ENCODE measurements at regions of chr5 and their contacts with region 1.

Region 1: DNA sequence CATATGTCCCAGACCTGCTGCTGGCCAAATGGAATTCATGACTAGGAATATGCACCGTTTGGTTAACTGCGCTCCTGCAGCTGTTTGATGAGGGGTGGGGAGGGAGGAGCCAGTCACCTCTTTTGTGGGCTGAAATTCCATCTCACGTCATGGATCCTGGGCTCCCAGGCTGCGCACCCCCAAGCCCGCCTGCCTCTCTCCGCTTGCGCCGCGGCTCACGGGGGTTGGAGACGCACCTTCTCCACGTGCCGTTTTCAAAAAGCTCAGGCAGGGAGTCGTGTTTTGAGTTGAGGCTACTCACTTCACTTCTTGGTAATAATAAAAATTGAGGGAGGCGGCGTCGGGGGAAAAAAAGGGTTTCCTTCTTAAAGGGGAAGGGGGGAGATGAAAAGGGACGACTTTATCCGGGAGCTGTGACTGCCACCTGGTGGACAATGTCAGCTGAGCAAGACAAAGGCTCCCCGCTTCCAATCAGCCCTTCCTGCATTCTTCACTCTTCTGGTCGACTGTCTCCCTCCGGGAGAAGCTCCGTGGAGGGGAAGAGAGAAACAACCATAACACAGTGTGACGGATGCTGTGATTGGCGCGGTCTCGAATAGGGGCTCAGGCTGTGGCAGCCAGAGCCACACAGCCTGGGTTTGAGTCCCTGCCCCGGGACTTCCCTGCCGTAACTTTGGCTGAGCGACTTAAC is 15.9 kb upstream of the C5orf47 start:
- DNase-seq: peak; percentile 54 to 81
- H3K4me3 ChIP-seq: no peak overlapping the region; the same call in 1 of the 2 replicates
- H3K27ac ChIP-seq: no peak overlapping the region
- H3K4me1 ChIP-seq: peaks cover 37% of the 10 kb centered on the region
- H3K27me3 ChIP-seq: no peaks in the 10 kb centered on the region
- CTCF ChIP-seq: peak; percentile 90

Region 2: DNA sequence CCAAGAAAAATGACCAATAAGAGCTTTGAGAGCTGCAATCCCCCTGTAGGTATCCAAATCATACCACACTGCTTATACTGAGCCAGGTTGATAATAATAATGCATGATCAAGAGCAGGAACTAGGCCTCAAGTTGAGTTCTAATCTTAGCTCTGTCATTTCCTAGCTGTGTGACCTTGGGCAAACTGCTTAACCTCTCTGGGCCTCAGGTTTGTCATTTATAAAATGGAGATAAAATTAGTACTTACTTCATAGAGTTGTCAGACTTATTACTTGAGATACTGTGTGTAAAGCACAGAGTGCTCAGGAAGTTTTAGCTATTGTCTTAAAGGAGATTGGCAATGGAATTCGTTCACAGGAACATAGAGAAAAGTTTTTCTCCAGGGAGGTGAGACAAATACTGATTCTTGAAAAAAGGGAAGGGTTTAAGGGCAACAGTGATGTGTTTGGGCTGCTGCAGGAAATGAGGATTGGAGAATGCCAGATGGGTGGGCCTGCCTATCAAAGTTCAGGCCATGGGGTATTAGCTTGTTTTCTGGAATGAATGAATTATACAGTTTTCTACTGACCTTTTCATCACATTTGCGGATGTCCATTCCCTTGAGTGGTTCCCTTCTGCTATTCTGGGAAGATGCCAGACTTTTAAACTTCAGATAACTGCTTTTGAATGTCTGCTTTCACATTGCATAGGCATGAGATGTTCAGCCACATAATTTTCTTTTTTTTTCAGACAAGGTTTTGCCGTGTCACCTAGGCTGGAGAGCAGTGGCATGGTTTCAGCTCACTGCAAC is 999.7 kb before region 1 on chr5:
- CTCF ChIA-PET with region 1: no interaction called
- POLR2A ChIA-PET with region 1: no interaction called
- intact Hi-C with region 1: loop called (anchors 10 kb)
- DNase-seq: no peak
- H3K4me3 ChIP-seq: no peak overlapping the region
- H3K27ac ChIP-seq: no peak overlapping the region
- H3K4me1 ChIP-seq: no peaks in the 10 kb centered on the region
- H3K27me3 ChIP-seq: no peaks in the 10 kb centered on the region
- CTCF ChIP-seq: no peak

Region 3: GRCh38 chr5:173293817-173294672 is 679.0 kb before region 1 on chr5:
- CTCF ChIA-PET with region 1: interaction called, 5 read pairs
- POLR2A ChIA-PET with region 1: no interaction called
- intact Hi-C with region 1: loop called (anchors 2 kb)
- DNase-seq: peak; percentile 71 to 83
- H3K4me3 ChIP-seq: peak overlapping the region; percentile 45; the same call in 1 of the 2 replicates
- H3K27ac ChIP-seq: peak overlapping the region; percentile 28
- H3K4me1 ChIP-seq: peaks cover 26% of the 10 kb centered on the region
- H3K27me3 ChIP-seq: no peaks in the 10 kb centered on the region
- CTCF ChIP-seq: peak; percentile 92

Region 4: DNA sequence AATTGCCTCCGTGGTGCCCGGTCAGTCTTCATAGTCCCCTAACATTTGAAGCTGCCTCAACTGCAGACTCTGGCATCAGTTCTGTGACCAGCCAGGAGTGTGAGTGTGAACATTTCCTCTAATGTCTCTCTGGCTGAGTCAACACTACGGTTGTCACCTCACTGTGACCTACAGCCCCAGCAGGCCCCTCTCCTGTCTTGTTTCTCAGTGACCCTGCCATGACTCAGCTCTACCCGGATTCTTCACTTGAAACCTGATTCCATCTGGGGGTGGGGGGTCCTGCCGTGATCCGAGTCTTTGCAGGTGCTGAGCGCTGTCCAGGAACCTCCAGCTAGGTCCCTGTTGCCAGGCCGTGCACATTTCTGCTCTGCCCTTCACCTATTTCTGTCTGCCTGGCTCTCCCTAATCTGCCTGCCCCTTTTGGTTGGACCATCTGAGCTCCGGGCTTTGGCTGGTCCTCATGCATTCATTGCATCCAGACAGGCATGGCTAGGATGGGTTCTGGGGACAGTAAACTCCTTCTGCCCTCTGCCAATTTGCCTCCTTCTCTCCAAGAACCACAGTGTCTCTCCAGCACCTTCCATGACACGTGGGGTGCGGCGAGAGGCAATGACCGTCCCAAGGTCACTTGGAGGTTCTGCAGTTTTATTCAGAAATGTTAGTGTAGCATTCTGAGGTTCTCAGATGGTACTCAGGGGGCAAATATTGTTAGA is 669.0 kb before region 1 on chr5:
- CTCF ChIA-PET with region 1: no interaction called
- POLR2A ChIA-PET with region 1: interaction called, 10 read pairs
- intact Hi-C with region 1: no loop called
- DNase-seq: peak; percentile 87 to 88
- H3K4me3 ChIP-seq: no peak overlapping the region
- H3K27ac ChIP-seq: peak overlapping the region; percentile 86
- H3K4me1 ChIP-seq: peaks cover 41% of the 10 kb centered on the region
- H3K27me3 ChIP-seq: no peaks in the 10 kb centered on the region
- CTCF ChIP-seq: no peak

Region 5: GRCh38 chr5:173917788-173918786 is 55.0 kb before region 1 on chr5:
- CTCF ChIA-PET with region 1: no interaction called
- POLR2A ChIA-PET with region 1: no interaction called
- intact Hi-C with region 1: loop called (anchors 2 kb)
- DNase-seq: peak; percentile 53 to 76
- H3K4me3 ChIP-seq: peak overlapping the region; percentile 79
- H3K27ac ChIP-seq: peak overlapping the region; percentile 86
- H3K4me1 ChIP-seq: peaks cover 29% of the 10 kb centered on the region
- H3K27me3 ChIP-seq: no peaks in the 10 kb centered on the region
- CTCF ChIP-seq: peak; percentile 43; the same call in 1 of the 2 replicates

Region 6: DNA sequence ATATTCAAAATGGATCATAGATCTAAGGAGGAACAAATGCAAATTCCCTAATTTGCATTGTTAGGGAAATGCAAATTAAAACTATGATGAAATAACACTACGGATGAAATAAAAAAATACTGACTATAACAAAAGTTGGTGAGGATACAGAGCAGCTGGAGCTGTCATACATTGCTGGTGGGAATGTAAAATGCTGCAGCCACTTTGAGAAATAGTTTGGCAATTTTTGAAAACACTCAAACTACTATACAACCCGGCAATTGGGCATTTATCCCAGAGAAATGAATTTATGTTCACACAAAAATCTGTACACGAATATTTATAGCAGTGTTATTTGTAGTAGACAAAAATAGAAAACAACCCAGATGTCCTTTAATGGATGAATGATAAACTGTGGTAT is 38.4 kb after region 1 on chr5:
- CTCF ChIA-PET with region 1: no interaction called
- POLR2A ChIA-PET with region 1: no interaction called
- intact Hi-C with region 1: no loop called
- DNase-seq: no peak
- H3K4me3 ChIP-seq: no peak overlapping the region
- H3K27ac ChIP-seq: no peak overlapping the region
- H3K4me1 ChIP-seq: no peaks in the 10 kb centered on the region; the same call in 1 of the 2 replicates
- H3K27me3 ChIP-seq: peaks cover 60% of the 10 kb centered on the region
- CTCF ChIP-seq: no peak